Activated T-helper 2 cell treated with anti-CD3 and anti-CD28 coated beads, Interferon-gamma antibody, Interleukin-2, Interleukin-4, amounts not matched to agents 10 μg/mL and 5 μg/mL and 100 μg/mL, durations not matched to agents 14 hours and 24 hours and 36 hours (primary cell): ENCODE measurements at regions of chr1 and their contacts with region 1.

Region 1: GRCh38 chr1:52636721-52637695 is 4.0 kb downstream of the SHISAL2A start:
- DNase-seq: peak; percentile 78
- H3K4me3 Mint-ChIP-seq: peak overlapping the region; percentile 69
- H3K27ac Mint-ChIP-seq: peak overlapping the region; percentile 99
- H3K4me1 Mint-ChIP-seq: peaks cover 51% of the 10 kb centered on the region
- H3K27me3 Mint-ChIP-seq: peaks cover 7% of the 10 kb centered on the region

Region 2: GRCh38 chr1:52601991-52602855 is 34.8 kb before region 1 on chr1 and contains the start of gene GPX7:
- intact Hi-C with region 1: loop called (anchors 2 kb)
- DNase-seq: peak; percentile 53
- H3K4me3 Mint-ChIP-seq: peak within 1 kb of the TSS; percentile 86
- H3K27ac Mint-ChIP-seq: peak within 1 kb of the TSS; percentile 87
- H3K4me1 Mint-ChIP-seq: peaks cover 22% of the 10 kb centered on the region
- H3K27me3 Mint-ChIP-seq: peaks cover 5% of the 10 kb centered on the region
- total RNA-seq, gene GPX7: 29.9 and 31.1 TPM in 2 replicates

Region 3: GRCh38 chr1:52659356-52659755 is 22.3 kb after region 1 on chr1:
- intact Hi-C with region 1: loop called (anchors 1 kb)
- DNase-seq: no peak
- H3K4me3 Mint-ChIP-seq: no peak overlapping the region
- H3K27ac Mint-ChIP-seq: peak overlapping the region; percentile 86
- H3K4me1 Mint-ChIP-seq: peaks cover 20% of the 10 kb centered on the region
- H3K27me3 Mint-ChIP-seq: no peaks in the 10 kb centered on the region